ENCODE measurements at regions of chr5 and their contacts with region 1.

Region 1: GRCh38 chr5:14364576-14365472 is 216.8 kb upstream of the OTULINL start:
- DNase-seq: no peak
- ATAC-seq: peak; percentile 25
- H3K4me3 Mint-ChIP-seq: peak overlapping the region; percentile 56
- H3K27ac Mint-ChIP-seq: peak overlapping the region; percentile 36
- H3K4me1 Mint-ChIP-seq: peaks cover 61% of the 10 kb centered on the region
- H3K27me3 Mint-ChIP-seq: peaks cover 1% of the 10 kb centered on the region

Region 2: GRCh38 chr5:14351845-14352712 is 12.7 kb before region 1 on chr5:
- CTCF ChIA-PET with region 1: interaction called, 26 read pairs
- POLR2A ChIA-PET with region 1: no interaction called
- DNase-seq: peak; percentile 74
- ATAC-seq: peak; percentile 97
- H3K4me3 Mint-ChIP-seq: no peak overlapping the region
- H3K27ac Mint-ChIP-seq: no peak overlapping the region
- H3K4me1 Mint-ChIP-seq: peaks cover 10% of the 10 kb centered on the region
- H3K27me3 Mint-ChIP-seq: peaks cover 8% of the 10 kb centered on the region

Region 3: DNA sequence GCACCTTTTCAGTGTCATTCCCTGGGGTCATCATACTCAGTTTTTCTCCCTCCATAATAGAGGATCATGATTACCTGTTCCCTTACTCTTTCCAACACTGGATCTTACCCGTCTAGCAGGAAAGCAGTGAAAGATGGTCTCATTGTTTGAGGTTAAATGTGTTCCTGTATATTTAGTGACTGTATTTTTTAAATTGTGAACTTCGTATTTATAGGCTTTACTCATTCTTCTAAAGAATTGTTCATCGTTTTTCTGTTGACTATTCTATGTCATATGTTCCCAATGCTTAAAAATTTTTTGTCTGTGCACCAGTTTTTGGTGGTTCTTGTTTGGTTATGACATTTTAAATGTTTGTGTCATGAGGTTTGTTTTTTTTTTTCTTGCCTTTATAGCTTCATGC is 12.0 kb after region 1 on chr5:
- CTCF ChIA-PET with region 1: no interaction called
- POLR2A ChIA-PET with region 1: no interaction called
- DNase-seq: no peak
- ATAC-seq: no peak
- H3K4me3 Mint-ChIP-seq: no peak overlapping the region
- H3K27ac Mint-ChIP-seq: no peak overlapping the region
- H3K4me1 Mint-ChIP-seq: peaks cover 5% of the 10 kb centered on the region
- H3K27me3 Mint-ChIP-seq: peaks cover 3% of the 10 kb centered on the region

Region 4: DNA sequence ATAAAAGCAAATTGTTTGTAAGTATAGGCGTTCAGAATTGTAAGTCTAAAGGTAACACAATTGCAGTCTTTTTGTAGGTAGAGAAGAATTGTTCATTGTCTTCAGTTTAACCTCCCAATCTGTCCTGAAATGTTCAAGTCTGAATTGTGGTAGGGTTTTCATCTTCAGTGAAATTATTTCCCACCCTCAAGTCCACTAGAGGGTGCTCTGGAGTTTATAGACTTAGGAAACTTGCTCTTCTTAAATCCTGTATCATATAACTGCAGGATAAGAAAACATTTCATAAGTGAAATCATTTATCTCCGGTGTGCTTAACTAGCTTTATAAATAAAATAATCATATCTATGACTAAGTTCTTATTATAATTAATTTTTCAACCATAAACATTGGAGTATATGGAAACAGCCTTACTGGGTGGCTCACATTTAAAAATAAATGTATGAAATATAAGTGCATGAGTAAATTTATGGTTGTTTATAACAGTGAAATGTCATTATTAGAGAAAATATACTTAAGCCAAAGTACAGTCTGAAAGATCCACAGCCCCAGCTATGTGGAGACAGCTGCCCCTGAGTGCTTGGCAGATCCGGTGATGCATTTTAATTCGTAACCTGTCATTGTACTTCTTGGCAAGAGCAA is 34.3 kb after region 1 on chr5:
- CTCF ChIA-PET with region 1: interaction called, 14 read pairs
- POLR2A ChIA-PET with region 1: interaction called, 3 read pairs
- DNase-seq: peak; percentile 62
- ATAC-seq: peak; percentile 57
- H3K4me3 Mint-ChIP-seq: no peak overlapping the region
- H3K27ac Mint-ChIP-seq: no peak overlapping the region
- H3K4me1 Mint-ChIP-seq: peaks cover 55% of the 10 kb centered on the region
- H3K27me3 Mint-ChIP-seq: peaks cover 3% of the 10 kb centered on the region

Region 5: GRCh38 chr5:14581333-14581890 is 216.6 kb after region 1 on chr5 and contains the start of gene OTULINL:
- CTCF ChIA-PET with region 1: interaction called, 9 read pairs
- POLR2A ChIA-PET with region 1: interaction called, 13 read pairs
- DNase-seq: peak; percentile 91
- ATAC-seq: peak; percentile 91
- H3K4me3 Mint-ChIP-seq: peak within 1 kb of the TSS; percentile 84
- H3K27ac Mint-ChIP-seq: peak within 1 kb of the TSS; percentile 87
- H3K4me1 Mint-ChIP-seq: peaks cover 43% of the 10 kb centered on the region
- H3K27me3 Mint-ChIP-seq: peaks cover 15% of the 10 kb centered on the region
- total RNA-seq, gene OTULINL: 59.6 to 68.3 TPM

Region 6: GRCh38 chr5:14655146-14655741 is 290.4 kb after region 1 on chr5:
- CTCF ChIA-PET with region 1: interaction called, 304 read pairs
- POLR2A ChIA-PET with region 1: interaction called, 6 read pairs
- DNase-seq: no peak
- ATAC-seq: peak; percentile 53
- H3K4me3 Mint-ChIP-seq: no peak overlapping the region
- H3K27ac Mint-ChIP-seq: no peak overlapping the region
- H3K4me1 Mint-ChIP-seq: peaks cover 21% of the 10 kb centered on the region
- H3K27me3 Mint-ChIP-seq: peaks cover 12% of the 10 kb centered on the region

Region 7: GRCh38 chr5:15003511-15003920 is 638.7 kb after region 1 on chr5:
- CTCF ChIA-PET with region 1: interaction called, 14 read pairs
- POLR2A ChIA-PET with region 1: no interaction called
- DNase-seq: peak; percentile 71
- ATAC-seq: peak; percentile 95
- H3K4me3 Mint-ChIP-seq: no peak overlapping the region
- H3K27ac Mint-ChIP-seq: no peak overlapping the region
- H3K4me1 Mint-ChIP-seq: peaks cover 16% of the 10 kb centered on the region
- H3K27me3 Mint-ChIP-seq: peaks cover 37% of the 10 kb centered on the region